ENCODE measurements at regions of chr18 and their contacts with region 1.

Region 1: GRCh38 chr18:51668101-51668500 is 470.6 kb upstream of the MEX3C start:
- DNase-seq: no peak
- ATAC-seq: peak; percentile 90
- H3K4me3 ChIP-seq: no peak overlapping the region
- H3K27ac ChIP-seq: no peak overlapping the region
- H3K4me1 ChIP-seq: no peaks in the 10 kb centered on the region
- H3K27me3 ChIP-seq: no peaks in the 10 kb centered on the region
- CTCF ChIP-seq: peak; percentile 70 to 84 (median 80)
- EP300 ChIP-seq: no peak
- POLR2A ChIP-seq: no peak
- RAD21 ChIP-seq: peak; percentile 85

Region 2: DNA sequence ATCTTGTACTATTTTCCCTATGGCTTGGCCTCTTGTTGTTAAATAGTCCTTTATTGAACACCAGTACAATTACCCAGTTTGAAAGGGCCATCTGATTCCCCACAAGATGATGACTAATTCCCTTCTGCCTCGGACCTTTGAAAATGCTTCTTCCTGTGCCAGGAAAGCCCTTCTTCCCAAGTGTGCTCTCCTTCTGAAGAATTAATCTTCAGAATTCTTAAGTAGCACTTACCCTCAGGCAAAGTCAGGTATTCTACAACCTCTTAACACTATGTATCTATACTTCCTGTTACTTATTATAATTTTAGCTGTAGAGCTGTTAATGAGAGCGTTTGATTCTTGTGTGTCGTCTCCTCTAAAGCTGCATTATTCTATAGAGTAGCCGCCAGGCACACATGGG is 442.0 kb before region 1 on chr18:
- CTCF ChIA-PET with region 1: no interaction called
- POLR2A ChIA-PET with region 1: no interaction called
- RAD21 ChIA-PET with region 1: no interaction called
- SMC1A ChIA-PET with region 1: no interaction called
- in situ Hi-C with region 1: no loop called
- intact Hi-C with region 1: no loop called
- DNase-seq: no peak
- ATAC-seq: no peak
- H3K4me3 ChIP-seq: no peak overlapping the region
- H3K27ac ChIP-seq: no peak overlapping the region
- H3K4me1 ChIP-seq: no peaks in the 10 kb centered on the region
- H3K27me3 ChIP-seq: no peaks in the 10 kb centered on the region; a peak in 1 of 4 replicates
- CTCF ChIP-seq: no peak
- EP300 ChIP-seq: no peak
- POLR2A ChIP-seq: no peak
- RAD21 ChIP-seq: no peak

Region 3: GRCh38 chr18:51478908-51479307 is 189.2 kb before region 1 on chr18:
- CTCF ChIA-PET with region 1: no interaction called
- POLR2A ChIA-PET with region 1: no interaction called
- RAD21 ChIA-PET with region 1: no interaction called
- SMC1A ChIA-PET with region 1: no interaction called
- in situ Hi-C with region 1: no loop called
- intact Hi-C with region 1: no loop called
- DNase-seq: no peak
- ATAC-seq: no peak
- H3K4me3 ChIP-seq: no peak overlapping the region
- H3K27ac ChIP-seq: no peak overlapping the region
- H3K4me1 ChIP-seq: no peaks in the 10 kb centered on the region
- H3K27me3 ChIP-seq: peaks cover 0 to 2% of the 10 kb centered on the region in 2 experiments; a peak in 1 of 4 replicates
- CTCF ChIP-seq: no peak
- EP300 ChIP-seq: no peak
- POLR2A ChIP-seq: no peak
- RAD21 ChIP-seq: no peak

Region 4: DNA sequence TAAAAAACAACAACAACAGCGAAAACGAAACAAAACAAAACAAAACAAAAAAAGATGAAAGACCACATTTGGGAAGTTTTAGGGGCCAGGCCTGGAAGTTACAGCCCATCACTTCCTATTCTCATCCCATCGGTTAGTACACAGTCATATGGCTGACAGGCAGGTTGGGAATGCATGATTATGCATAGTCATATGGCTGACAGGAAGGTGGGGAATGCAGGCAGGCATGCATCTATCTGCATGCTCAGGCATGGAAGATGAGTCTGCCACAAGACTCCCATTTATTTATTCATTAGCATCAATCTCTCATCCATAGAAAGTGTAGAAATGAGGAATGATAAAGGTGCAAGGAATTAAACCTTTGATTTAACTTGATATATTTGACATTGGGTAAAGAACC is 145.3 kb before region 1 on chr18:
- CTCF ChIA-PET with region 1: no interaction called
- POLR2A ChIA-PET with region 1: no interaction called
- RAD21 ChIA-PET with region 1: no interaction called
- SMC1A ChIA-PET with region 1: no interaction called
- in situ Hi-C with region 1: no loop called
- intact Hi-C with region 1: no loop called
- DNase-seq: no peak
- ATAC-seq: no peak
- H3K4me3 ChIP-seq: no peak overlapping the region
- H3K27ac ChIP-seq: no peak overlapping the region
- H3K4me1 ChIP-seq: no peaks in the 10 kb centered on the region
- H3K27me3 ChIP-seq: no peaks in the 10 kb centered on the region
- CTCF ChIP-seq: no peak
- EP300 ChIP-seq: no peak
- POLR2A ChIP-seq: no peak
- RAD21 ChIP-seq: no peak

Region 5: DNA sequence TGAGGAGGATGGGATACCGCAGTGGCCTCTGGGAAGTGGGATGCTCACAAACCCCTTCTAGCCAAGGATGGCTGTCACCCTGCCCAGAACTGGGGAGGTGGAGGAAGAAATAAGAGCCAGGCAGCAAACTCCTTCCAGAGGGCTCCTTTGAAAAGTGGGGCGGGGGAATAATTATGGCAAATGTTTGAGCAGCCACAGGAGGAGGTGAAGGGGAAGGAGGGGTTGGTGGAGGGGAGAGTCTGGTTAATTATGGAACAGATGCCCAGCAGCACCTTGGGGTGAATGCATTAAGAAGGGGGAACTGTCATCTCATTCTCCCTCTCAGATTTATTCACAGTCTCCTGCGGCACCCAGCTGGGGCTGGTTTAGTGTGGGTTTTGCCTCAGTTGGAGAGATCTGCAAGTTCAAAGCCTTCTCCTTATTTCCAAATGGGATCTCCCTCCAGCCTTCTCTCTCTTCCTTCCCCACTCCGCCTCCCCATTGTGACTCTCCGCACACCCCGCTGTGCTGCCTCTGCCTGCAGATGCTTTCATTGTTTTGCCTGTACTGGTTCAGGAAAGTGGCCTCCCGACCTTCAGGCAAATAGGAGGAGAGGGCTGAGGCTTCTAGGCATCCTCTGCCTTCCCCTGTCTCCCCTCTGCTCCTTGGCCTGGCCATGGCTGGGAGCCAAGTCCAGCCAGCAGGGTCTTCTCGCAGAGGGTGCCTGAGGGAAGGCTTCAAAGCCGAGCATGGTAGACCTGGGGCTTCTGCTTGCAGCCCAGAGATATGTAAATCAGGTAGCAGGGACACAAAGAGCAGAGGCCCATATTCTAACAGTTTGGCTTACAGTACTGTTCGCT is 13.4 kb before region 1 on chr18:
- CTCF ChIA-PET with region 1: interaction called, 14 read pairs
- POLR2A ChIA-PET with region 1: no interaction called
- RAD21 ChIA-PET with region 1: interaction called, 5 read pairs
- SMC1A ChIA-PET with region 1: interaction called, 7 read pairs
- in situ Hi-C with region 1: no loop called
- intact Hi-C with region 1: no loop called
- DNase-seq: no peak
- ATAC-seq: peak; percentile 90
- H3K4me3 ChIP-seq: no peak overlapping the region
- H3K27ac ChIP-seq: peak overlapping the region; percentile 5
- H3K4me1 ChIP-seq: peaks cover 14% of the 10 kb centered on the region
- H3K27me3 ChIP-seq: no peaks in the 10 kb centered on the region
- CTCF ChIP-seq: no peak
- EP300 ChIP-seq: no peak
- POLR2A ChIP-seq: peak; percentile 44
- RAD21 ChIP-seq: no peak

Region 6: GRCh38 chr18:51739044-51739666 is 71.1 kb after region 1 on chr18:
- CTCF ChIA-PET with region 1: interaction called, 16 read pairs
- POLR2A ChIA-PET with region 1: interaction called, 4 read pairs
- RAD21 ChIA-PET with region 1: interaction called, 3 read pairs
- SMC1A ChIA-PET with region 1: interaction called, 10 read pairs
- in situ Hi-C with region 1: no loop called
- intact Hi-C with region 1: no loop called
- DNase-seq: no peak
- ATAC-seq: peak; percentile 91
- H3K4me3 ChIP-seq: no peak overlapping the region
- H3K27ac ChIP-seq: no peak overlapping the region
- H3K4me1 ChIP-seq: no peaks in the 10 kb centered on the region; the same call in 1 of the 2 replicates
- H3K27me3 ChIP-seq: no peaks in the 10 kb centered on the region
- CTCF ChIP-seq: no peak
- EP300 ChIP-seq: peak; percentile 70 to 87
- POLR2A ChIP-seq: no peak
- RAD21 ChIP-seq: no peak

Region 7: DNA sequence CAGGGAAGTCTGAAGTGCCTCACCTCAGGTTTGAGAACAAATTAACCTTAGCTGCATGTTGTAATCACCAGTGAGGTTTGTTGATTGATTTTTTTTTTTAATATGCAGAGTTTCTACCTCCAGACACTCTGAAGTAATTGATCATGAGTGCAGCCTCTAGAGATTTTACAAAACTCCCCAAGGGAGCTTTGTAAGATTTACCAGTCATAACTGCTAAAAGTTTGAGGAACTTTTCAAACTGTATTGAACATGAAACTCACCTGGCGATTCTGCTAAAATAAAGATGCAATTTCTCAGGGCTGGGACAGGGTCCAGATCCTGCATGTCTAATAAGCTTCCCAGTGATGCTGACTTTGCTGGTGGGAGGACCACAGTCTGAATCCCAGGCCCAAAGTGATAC is 332.3 kb after region 1 on chr18:
- CTCF ChIA-PET with region 1: interaction called, 4 read pairs
- POLR2A ChIA-PET with region 1: no interaction called
- RAD21 ChIA-PET with region 1: interaction called, 4 read pairs
- SMC1A ChIA-PET with region 1: interaction called, 10 read pairs
- in situ Hi-C with region 1: no loop called
- intact Hi-C with region 1: no loop called
- DNase-seq: no peak
- ATAC-seq: peak; percentile 81
- H3K4me3 ChIP-seq: no peak overlapping the region
- H3K27ac ChIP-seq: no peak overlapping the region
- H3K4me1 ChIP-seq: no peaks in the 10 kb centered on the region
- H3K27me3 ChIP-seq: no peaks in the 10 kb centered on the region
- CTCF ChIP-seq: no peak
- EP300 ChIP-seq: no peak
- POLR2A ChIP-seq: no peak
- RAD21 ChIP-seq: no peak

Region 8: DNA sequence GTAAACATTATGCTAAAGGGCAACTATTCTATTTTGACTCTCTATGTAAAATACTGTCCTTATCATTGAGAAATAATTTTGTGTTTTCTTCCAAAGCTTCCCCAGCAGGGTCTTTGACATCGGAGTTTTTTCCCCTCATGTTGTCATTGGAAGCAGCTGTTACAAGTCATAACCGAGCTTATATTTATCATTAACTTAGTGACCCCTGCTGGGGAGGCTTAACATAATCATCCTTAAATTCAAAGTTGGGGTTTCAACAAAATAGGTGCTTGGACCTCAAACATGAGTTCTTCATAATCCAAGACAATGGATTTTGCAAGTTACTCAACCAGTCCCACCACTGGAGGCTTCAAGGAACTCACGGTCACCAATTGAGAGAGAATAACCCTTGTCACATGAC is 1002.8 kb after region 1 on chr18:
- CTCF ChIA-PET with region 1: interaction called, 18 read pairs
- POLR2A ChIA-PET with region 1: no interaction called
- RAD21 ChIA-PET with region 1: interaction called, 15 read pairs
- SMC1A ChIA-PET with region 1: interaction called, 13 read pairs
- in situ Hi-C with region 1: no loop called
- intact Hi-C with region 1: loop called (anchors 2 kb)
- DNase-seq: no peak
- ATAC-seq: no peak; the same call in 2 of the 3 replicates
- H3K4me3 ChIP-seq: no peak overlapping the region
- H3K27ac ChIP-seq: no peak overlapping the region
- H3K4me1 ChIP-seq: no peaks in the 10 kb centered on the region
- H3K27me3 ChIP-seq: no peaks in the 10 kb centered on the region; a peak in 1 of 4 replicates
- CTCF ChIP-seq: peak; percentile 9 to 30 (median 17); a peak in 2 of 6 replicates
- EP300 ChIP-seq: no peak
- POLR2A ChIP-seq: no peak
- RAD21 ChIP-seq: peak; percentile 44

Region 9: GRCh38 chr18:53380063-53380639 is 1712.0 kb after region 1 on chr18:
- CTCF ChIA-PET with region 1: interaction called, 10 read pairs
- POLR2A ChIA-PET with region 1: no interaction called
- RAD21 ChIA-PET with region 1: interaction called, 5 read pairs
- SMC1A ChIA-PET with region 1: interaction called, 5 read pairs
- in situ Hi-C with region 1: loop called (anchors 25 kb)
- intact Hi-C with region 1: no loop called
- DNase-seq: peak; percentile 3
- ATAC-seq: peak; percentile 86
- H3K4me3 ChIP-seq: no peak overlapping the region
- H3K27ac ChIP-seq: no peak overlapping the region
- H3K4me1 ChIP-seq: no peaks in the 10 kb centered on the region
- H3K27me3 ChIP-seq: no peaks in the 10 kb centered on the region
- CTCF ChIP-seq: peak; percentile 51 to 62 (median 52); a peak in 5 of 6 replicates
- EP300 ChIP-seq: no peak
- POLR2A ChIP-seq: no peak
- RAD21 ChIP-seq: peak; percentile 48